BJ (cell line): ENCODE measurements at regions of chr14 and their contacts with region 1.

Region 1: DNA sequence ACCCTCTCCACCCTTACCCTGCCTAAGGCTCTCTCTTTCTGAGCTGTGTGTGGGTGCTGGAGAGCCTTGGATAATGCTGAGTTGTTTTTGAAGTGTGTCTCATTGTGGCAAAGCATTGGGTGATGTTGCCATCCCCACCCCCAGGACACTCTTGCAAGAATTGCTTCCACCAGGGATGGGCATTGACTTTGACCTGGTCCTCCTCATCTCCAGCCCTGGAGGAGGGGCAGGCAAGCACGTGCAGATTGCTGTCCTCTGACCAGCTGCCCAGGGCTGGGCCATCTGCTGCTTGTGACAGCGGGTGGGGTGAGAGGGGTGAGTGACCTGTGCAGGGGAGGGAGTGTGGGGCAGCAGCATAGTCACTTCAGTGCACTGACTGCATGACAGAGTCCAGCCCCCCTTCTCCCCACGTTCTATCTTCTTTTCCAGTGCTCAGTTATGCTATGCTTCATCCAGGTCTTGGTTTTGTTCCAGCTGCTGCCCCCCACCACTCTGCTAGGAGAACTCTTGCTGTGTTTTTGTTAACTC is 26.2 kb downstream of the SUSD6 start:
- DNase-seq: no peak
- H3K4me3 ChIP-seq: no peak overlapping the region
- H3K27me3 ChIP-seq: no peaks in the 10 kb centered on the region
- CTCF ChIP-seq: no peak

Region 2: GRCh38 chr14:69766984-69767368 is 129.4 kb after region 1 on chr14 and contains the start of gene SRSF5:
- CTCF ChIA-PET with region 1: no interaction called
- POLR2A ChIA-PET with region 1: interaction called, 13 read pairs
- DNase-seq: peak; percentile 77
- H3K4me3 ChIP-seq: peak within 1 kb of the TSS; percentile 95
- H3K27me3 ChIP-seq: no peaks in the 10 kb centered on the region
- CTCF ChIP-seq: no peak
- polyA plus RNA-seq, gene SRSF5: 162 and 194 TPM in 2 replicates